ENCODE measurements at regions of chr3 and their contacts with region 1.

Region 1: GRCh38 chr3:194103983-194104751 is 31.8 kb upstream of the HES1 start:
- DNase-seq: peak; percentile 99
- H3K4me3 ChIP-seq: peak overlapping the region; percentile 81
- H3K27ac ChIP-seq: peak overlapping the region; percentile 96
- H3K4me1 ChIP-seq: peaks cover 88% of the 10 kb centered on the region
- CTCF ChIP-seq: no peak

Region 2: GRCh38 chr3:194064380-194065332 is 39.5 kb before region 1 on chr3:
- CTCF ChIA-PET with region 1: no interaction called
- POLR2A ChIA-PET with region 1: interaction called, 25 read pairs
- intact Hi-C with region 1: no loop called
- DNase-seq: peak; percentile 67
- H3K4me3 ChIP-seq: no peak overlapping the region
- H3K27ac ChIP-seq: no peak overlapping the region
- H3K4me1 ChIP-seq: peaks cover 22% of the 10 kb centered on the region
- CTCF ChIP-seq: no peak

Region 3: DNA sequence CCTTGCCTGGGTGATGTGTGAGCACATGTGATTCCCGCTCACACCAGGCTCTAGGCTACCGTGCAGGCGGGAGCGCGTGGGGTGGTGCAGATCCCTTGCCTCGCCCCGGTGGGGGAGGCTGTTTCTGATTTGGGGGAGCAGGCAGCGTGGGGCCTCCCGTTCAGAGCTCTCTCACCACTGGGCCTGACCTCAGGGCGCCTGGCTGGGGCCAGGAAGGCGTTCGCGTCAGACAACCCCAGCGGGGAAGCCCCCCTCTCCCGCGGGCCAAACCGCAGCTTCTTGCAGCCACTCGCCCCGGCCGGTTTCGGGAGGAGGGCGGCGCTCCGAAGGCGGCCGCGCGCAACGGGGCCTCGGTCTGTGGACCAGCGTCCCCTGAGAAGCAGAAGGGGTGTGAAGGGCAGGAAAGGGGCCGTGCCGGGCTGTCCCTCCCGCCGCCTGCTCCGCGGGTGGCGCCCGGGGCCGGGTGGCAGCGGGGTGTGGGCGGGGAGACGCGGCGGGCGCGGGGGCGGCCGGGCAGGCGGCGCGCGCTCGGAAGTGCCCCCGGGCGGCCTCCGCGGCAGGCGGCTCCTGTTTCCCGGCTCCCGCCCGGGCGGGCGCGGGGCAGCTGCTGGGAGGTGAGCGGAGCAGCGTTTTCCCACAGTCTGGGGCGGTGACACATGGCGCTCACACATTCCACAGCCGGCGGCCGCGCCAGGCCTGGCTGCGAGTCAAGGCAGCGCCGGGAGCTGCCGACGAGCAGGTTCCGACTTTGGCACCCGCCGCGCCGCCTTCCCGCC is 33.3 kb before region 1 on chr3:
- CTCF ChIA-PET with region 1: interaction called, 12 read pairs
- POLR2A ChIA-PET with region 1: interaction called, 29 read pairs
- intact Hi-C with region 1: loop called (anchors 1 kb)
- DNase-seq: peak; percentile 86
- H3K4me3 ChIP-seq: peak overlapping the region; percentile 61
- H3K27ac ChIP-seq: peak overlapping the region; percentile 54
- H3K4me1 ChIP-seq: peaks cover 57% of the 10 kb centered on the region
- CTCF ChIP-seq: no peak

Region 4: DNA sequence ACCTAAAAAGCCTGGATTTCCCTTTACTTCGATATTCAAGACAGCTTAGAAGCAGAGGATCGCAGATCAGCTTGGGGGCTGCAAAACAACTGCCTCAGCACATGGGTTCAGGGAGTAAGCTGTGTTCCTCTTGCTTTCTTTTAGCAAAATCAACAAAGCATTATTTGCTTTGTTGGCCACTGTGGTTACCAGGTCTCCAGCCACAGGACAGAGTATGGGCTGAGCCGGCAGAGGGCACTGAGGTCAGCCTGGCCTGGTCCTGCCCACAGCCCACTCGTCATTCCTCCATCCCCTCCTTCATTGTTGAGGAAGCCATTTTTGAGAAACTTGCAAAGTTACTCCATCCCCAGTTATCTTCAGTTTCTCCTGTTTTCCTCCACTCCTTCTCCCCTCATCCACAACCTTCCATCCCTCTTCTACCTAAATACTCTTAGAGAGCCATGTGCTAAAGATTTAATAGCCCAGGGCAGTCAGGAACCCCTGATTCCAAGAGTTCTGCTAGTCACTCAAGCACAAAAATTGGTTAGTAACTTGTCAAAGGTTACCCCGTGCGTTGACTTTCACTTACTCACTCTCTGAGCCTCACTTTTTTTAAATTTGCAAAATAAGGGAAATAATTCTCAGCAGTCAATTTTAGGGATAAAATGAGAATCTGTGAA is 28.2 kb before region 1 on chr3:
- CTCF ChIA-PET with region 1: interaction called, 12 read pairs
- POLR2A ChIA-PET with region 1: interaction called, 141 read pairs
- intact Hi-C with region 1: loop called (anchors 1 kb)
- DNase-seq: no peak
- H3K4me3 ChIP-seq: no peak overlapping the region
- H3K27ac ChIP-seq: no peak overlapping the region
- H3K4me1 ChIP-seq: peaks cover 56% of the 10 kb centered on the region
- CTCF ChIP-seq: no peak

Region 5: GRCh38 chr3:194084284-194084683 is 19.9 kb before region 1 on chr3:
- CTCF ChIA-PET with region 1: interaction called, 16 read pairs
- POLR2A ChIA-PET with region 1: interaction called, 141 read pairs
- intact Hi-C with region 1: no loop called
- DNase-seq: peak; percentile 70
- H3K4me3 ChIP-seq: peak overlapping the region; percentile 0
- H3K27ac ChIP-seq: peak overlapping the region; percentile 33
- H3K4me1 ChIP-seq: peaks cover 55% of the 10 kb centered on the region
- CTCF ChIP-seq: no peak

Region 6: DNA sequence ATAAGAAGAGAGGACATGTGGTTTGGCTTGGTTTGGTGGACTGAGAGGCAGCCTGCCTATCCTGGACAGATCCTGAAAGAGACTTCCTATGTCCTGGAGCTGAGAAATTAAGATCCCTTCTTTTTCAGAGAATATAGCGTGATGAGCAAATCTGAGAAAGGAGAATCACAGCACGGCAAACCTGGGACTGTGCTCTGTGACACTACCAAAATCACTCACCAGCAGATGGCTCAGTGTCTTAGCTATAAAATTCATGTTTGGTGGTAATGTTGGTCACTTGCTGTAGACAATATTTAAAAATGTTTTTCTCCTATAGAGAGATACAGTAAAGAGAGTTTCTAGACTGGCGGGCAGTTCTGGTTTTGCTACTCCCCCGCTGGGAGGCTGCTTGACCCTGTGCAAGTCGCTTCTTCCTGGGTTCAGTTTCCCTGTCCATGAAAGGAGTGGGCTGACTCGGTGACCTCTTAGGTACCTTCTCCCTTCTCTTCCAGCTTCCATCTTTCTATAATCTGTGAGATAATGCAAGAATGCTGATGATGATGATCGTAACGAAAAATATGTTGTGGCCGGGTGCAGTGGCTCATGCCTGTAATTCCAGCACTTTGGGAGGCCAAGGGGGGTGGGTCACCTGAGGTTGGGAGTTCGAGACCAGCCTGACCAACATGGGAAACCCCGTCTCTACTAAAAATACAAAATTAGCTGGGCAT is 24.2 kb after region 1 on chr3:
- CTCF ChIA-PET with region 1: interaction called, 9 read pairs
- POLR2A ChIA-PET with region 1: interaction called, 172 read pairs
- intact Hi-C with region 1: loop called (anchors 1 kb)
- DNase-seq: no peak
- H3K4me3 ChIP-seq: no peak overlapping the region
- H3K27ac ChIP-seq: no peak overlapping the region
- H3K4me1 ChIP-seq: peaks cover 39% of the 10 kb centered on the region
- CTCF ChIP-seq: 0 out of 2 replicates have a peak, but pooled peaks have one; percentile 33

Region 7: GRCh38 chr3:194306109-194306686 is 202.0 kb after region 1 on chr3:
- CTCF ChIA-PET with region 1: no interaction called
- POLR2A ChIA-PET with region 1: no interaction called
- intact Hi-C with region 1: loop called (anchors 1 kb)
- DNase-seq: peak; percentile 85
- H3K4me3 ChIP-seq: no peak overlapping the region
- H3K27ac ChIP-seq: no peak overlapping the region
- H3K4me1 ChIP-seq: peaks cover 24% of the 10 kb centered on the region
- CTCF ChIP-seq: no peak

Measured in OCI-LY7 (cell line).